Calu3 (cell line): ENCODE measurements at regions of chr13 and their contacts with region 1.

Region 1: GRCh38 chr13:112689303-112690165 is at the start of gene ATP11A:
- DNase-seq: peak; percentile 73
- H3K4me3 Mint-ChIP-seq: peak within 1 kb of the TSS; percentile 62
- H3K27ac Mint-ChIP-seq: peak within 1 kb of the TSS; percentile 72
- H3K4me1 Mint-ChIP-seq: peaks cover 8% of the 10 kb centered on the region
- H3K27me3 Mint-ChIP-seq: no peaks in the 10 kb centered on the region
- CTCF ChIP-seq: no peak
- total RNA-seq, gene ATP11A: 113 and 115 TPM in 2 replicates

Region 2: DNA sequence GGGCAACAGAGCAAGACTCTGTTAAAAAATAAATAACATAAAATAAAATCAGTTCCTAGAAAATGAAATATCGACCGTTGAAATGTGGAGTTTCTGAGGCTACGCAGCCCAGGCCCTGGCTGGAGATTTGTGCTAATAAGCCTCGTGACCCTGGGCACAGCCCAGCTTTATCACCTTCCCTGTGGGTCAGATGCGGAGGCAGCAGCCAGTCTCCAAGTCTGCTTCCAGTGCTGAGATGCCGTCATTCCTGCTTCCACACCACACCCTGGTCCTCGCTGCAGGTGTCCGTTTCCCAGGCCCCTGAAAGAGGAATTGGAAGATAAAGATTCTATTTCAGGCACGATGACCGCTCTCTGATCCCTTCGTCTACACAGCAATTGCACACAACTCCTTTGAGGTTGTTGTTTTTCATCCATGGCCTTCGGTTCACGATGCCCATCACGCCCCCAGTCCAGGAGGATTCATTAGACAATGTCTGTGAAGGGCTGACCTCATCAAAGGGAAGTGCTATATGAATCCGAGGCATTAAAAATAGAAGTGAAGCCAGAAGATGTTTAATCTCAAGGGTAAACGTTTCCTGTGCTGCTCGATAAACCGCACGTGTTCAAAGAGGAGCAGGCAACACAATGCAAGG is 48.0 kb before region 1 on chr13:
- CTCF ChIA-PET with region 1: no interaction called
- intact Hi-C with region 1: loop called (anchors 2 kb)
- DNase-seq: no peak
- H3K4me3 Mint-ChIP-seq: no peak overlapping the region
- H3K27ac Mint-ChIP-seq: no peak overlapping the region
- H3K4me1 Mint-ChIP-seq: no peaks in the 10 kb centered on the region
- H3K27me3 Mint-ChIP-seq: no peaks in the 10 kb centered on the region
- CTCF ChIP-seq: no peak

Region 3: GRCh38 chr13:112711528-112712265 is 22.2 kb after region 1 on chr13:
- CTCF ChIA-PET with region 1: no interaction called
- intact Hi-C with region 1: no loop called
- DNase-seq: peak; percentile 43
- H3K4me3 Mint-ChIP-seq: no peak overlapping the region
- H3K27ac Mint-ChIP-seq: no peak overlapping the region
- H3K4me1 Mint-ChIP-seq: peaks cover 9% of the 10 kb centered on the region
- H3K27me3 Mint-ChIP-seq: no peaks in the 10 kb centered on the region
- CTCF ChIP-seq: no peak